Heart left ventricle (tissue), 16 donors: ENCODE measurements at regions of chr16 and their contacts with region 1.

Region 1: DNA sequence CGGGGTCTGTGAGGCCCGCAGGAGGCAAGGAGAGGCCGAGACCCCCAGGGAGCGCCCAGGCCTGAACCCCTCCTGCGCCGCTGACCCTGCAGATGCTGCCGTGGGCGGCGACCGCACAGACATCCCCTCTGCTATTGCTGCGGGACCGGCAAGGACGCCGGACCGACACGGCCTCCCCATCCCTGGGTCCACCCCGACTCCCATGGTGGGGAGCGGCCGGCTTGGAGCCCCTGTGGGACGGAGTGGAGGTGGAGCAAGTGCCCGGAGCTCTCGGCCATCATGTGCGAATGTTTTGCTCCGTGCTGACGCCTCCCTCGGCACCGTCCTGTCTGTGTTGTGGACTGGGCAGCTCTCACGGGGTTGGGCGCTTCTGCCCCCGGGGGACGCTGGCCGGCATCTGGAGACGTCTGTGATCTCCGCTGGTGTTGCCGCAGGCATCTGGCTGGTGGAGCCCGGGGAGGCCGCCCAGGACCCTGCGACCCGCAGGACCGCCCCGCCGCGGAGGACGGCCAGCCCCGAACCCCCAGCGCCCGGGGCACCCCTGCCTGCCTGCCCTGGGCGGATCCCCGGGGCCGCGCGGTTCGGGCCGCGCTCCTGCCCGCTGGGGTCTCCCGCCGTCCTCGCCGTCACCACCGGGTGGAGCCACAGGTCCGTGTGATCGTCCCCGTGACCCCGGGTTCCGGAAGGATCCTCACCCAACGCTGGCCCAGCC is 12.8 kb upstream of the GNG13 start:
- DNase-seq: peak in 2 of 5 donors; percentile 40 to 63
- ATAC-seq: peak in 3 of 4 donors; percentile 64 to 83 (median 67)
- H3K4me3 ChIP-seq: peak overlapping the region in 9 of 12 donors; percentile 13 to 41 (median 28)
- H3K27ac ChIP-seq: no peak overlapping the region
- H3K4me1 ChIP-seq: peaks cover 0 to 24% (median 4%) of the 10 kb centered on the region in 12 donors
- H3K27me3 ChIP-seq: peaks cover 10 to 73% (median 24%) of the 10 kb centered on the region in 9 donors
- CTCF ChIP-seq: peak; percentile 35 to 71 (median 62)
- POLR2A ChIP-seq: no peak

Region 2: GRCh38 chr16:1054660-1055556 is 241.5 kb after region 1 on chr16:
- intact Hi-C with region 1: loop called (anchors 1 to 5 kb)
- DNase-seq: peak in 4 of 5 donors; percentile 51 to 75 (median 56)
- ATAC-seq: peak; percentile 30 to 83 (median 72)
- H3K4me3 ChIP-seq: no peak overlapping the region
- H3K27ac ChIP-seq: no peak overlapping the region
- H3K4me1 ChIP-seq: peaks cover 0 to 6% (median 0%) of the 10 kb centered on the region in 12 donors
- H3K27me3 ChIP-seq: peaks cover 0 to 42% (median 7%) of the 10 kb centered on the region in 9 donors
- CTCF ChIP-seq: peak; percentile 65 to 86 (median 80)
- POLR2A ChIP-seq: no peak

Region 3: DNA sequence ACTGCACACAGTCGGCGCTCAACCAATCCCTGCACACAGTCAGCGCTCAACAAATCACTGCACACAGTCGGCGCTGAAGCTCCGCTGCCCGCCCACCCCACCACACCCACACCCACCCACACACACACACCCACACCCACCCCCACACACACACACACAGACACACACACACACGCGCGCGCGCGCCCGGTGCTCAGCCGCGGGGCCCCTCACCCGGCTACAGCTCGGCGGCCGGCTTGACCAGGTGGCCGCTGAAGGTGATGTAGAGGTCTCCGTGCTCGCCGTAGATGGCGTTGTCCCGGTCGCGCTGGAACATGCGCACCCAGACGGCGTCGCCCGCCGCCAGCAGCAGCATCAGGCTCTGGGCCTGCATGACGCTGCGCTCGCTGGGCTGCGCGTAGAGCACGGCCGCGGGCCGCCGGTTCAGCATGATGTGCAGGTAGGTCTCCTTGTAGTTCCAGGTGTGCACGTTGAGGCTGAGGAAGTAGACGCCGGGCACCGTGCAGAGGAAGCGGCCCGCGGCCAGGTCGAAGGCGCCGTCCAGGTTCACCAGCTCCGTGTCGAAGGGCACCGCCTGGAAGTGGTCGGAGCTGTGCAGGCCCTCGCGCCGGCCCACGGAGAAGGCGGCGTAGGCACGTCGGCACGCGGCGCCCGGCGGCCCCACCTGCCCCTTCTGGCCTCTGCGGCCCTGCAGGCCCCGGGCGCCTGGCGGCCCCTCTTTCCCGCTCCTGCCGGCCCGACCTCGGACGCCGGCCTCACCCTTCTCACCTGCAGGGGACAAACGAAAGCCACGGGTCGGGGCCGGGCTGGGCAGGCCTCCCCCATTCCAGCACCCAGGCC is 280.1 kb after region 1 on chr16:
- intact Hi-C with region 1: loop called in 2 of 10 experiments (anchors 5 to 10 kb)
- DNase-seq: no peak
- ATAC-seq: no peak
- H3K4me3 ChIP-seq: no peak overlapping the region
- H3K27ac ChIP-seq: no peak overlapping the region
- H3K4me1 ChIP-seq: peaks cover 0 to 60% (median 26%) of the 10 kb centered on the region in 12 donors
- H3K27me3 ChIP-seq: peaks cover 0 to 26% (median 3%) of the 10 kb centered on the region in 9 donors
- CTCF ChIP-seq: no peak
- POLR2A ChIP-seq: no peak

Region 4: DNA sequence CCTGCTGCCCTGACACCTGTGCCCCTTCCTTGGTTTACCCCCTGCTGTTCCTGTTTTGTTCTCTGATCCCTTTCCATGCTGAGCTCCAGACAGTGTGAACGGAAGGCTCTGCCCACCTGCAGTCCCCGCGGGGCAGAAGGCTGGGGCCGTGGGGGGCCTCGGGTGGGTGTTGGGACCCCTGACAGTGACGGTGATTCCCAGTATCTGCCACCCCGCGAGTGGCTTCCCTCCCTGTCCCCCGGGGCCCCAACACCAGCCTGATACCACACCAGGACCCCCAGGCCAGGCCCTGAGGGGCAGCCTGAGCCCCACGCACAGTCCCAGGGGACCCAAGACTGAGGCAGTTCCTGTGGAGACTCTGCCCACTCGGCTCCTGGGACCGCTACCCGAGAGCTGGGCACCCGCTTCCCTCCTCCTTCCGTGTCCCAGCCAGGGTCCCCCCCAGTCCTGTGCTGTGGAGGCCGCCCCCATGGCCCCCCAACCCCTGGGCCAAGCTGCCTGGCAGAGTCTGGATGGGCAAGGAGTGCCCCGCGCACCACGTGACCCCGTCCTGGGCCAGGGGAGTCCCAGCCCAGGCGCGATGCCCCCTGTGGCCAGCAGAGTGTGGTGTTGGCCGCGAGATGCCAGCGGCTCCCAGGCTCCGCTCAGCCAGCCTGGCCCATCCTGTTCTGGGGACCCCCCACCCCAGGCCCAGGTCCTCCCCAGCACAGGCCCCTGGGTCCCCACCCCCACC is 292.7 kb after region 1 on chr16:
- intact Hi-C with region 1: loop called in 2 of 10 experiments (anchors 1 to 2 kb)
- DNase-seq: peak; percentile 50 to 80 (median 67)
- ATAC-seq: peak; percentile 60 to 83 (median 75)
- H3K4me3 ChIP-seq: no peak overlapping the region
- H3K27ac ChIP-seq: no peak overlapping the region
- H3K4me1 ChIP-seq: peaks cover 0 to 8% (median 5%) of the 10 kb centered on the region in 12 donors
- H3K27me3 ChIP-seq: peaks cover 13 to 75% (median 30%) of the 10 kb centered on the region in 9 donors
- CTCF ChIP-seq: peak; percentile 49 to 88 (median 70)
- POLR2A ChIP-seq: no peak

Region 5: DNA sequence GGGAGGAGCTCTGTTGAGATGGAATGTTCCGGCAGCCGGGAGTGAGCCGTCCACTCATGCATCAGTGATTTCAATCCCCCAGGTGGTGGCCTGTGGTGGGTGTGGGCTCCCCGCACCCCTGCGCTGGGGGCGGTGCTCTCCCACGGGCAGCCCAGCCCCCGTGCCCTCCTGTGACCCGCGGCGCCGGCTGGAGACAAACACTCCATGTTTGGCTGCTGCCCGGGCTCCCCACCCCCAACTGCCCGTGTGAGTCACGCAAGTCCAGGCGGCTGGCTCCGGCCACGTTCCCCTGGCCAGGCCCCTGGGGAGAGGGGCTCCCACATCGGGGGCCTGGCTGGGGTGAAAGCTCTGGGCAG is 368.9 kb after region 1 on chr16:
- intact Hi-C with region 1: no loop called
- DNase-seq: peak; percentile 61 to 89 (median 76)
- ATAC-seq: peak; percentile 43 to 74 (median 70)
- H3K4me3 ChIP-seq: peak overlapping the region in 1 of 12 donors; percentile 1
- H3K27ac ChIP-seq: peak overlapping the region in 8 of 12 donors; percentile 22 to 90 (median 62)
- H3K4me1 ChIP-seq: peaks cover 0 to 29% (median 8%) of the 10 kb centered on the region in 12 donors
- H3K27me3 ChIP-seq: peaks cover 0 to 27% (median 0%) of the 10 kb centered on the region in 9 donors
- CTCF ChIP-seq: no peak
- POLR2A ChIP-seq: no peak

Region 6: DNA sequence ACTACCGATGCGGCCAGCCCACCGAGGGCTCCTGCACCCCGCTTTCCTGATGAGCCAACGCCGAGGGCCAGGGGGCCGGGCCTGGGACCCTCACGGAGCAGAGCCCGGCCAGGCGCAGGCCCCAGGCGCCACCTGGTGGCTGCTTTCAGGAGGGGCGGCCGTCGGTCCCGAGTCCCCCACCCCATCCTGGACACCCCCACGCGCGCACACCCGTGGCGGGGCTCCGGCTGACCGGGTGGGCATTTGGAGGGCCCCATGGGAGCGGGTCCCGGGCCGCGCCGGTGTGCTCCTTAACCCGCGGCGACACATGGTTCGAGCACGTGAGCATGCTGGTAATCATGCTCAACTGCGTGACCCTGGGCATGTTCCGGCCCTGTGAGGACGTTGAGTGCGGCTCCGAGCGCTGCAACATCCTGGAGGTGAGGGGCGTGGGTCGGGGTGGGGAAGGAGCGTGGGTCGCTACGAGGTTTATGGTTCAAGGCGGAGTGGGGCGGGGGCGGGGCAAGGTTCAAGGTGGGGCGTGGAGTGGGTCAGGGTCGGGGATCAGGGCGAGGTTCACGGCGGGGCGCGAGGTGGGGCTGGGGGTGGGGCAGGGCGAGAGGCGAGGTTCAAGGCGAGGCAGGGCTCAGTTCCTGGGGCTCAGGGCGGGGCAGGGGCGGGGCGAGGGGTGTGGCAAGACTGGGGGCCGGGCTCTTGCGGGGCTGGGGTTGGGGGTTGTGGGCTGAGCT is 381.5 kb after region 1 on chr16:
- intact Hi-C with region 1: loop called in 1 of 10 experiments (anchors 10 kb)
- DNase-seq: no peak
- ATAC-seq: peak in 3 of 4 donors; percentile 8 to 55 (median 20)
- H3K4me3 ChIP-seq: no peak overlapping the region
- H3K27ac ChIP-seq: peak overlapping the region in 1 of 12 donors; percentile 80
- H3K4me1 ChIP-seq: peaks cover 0 to 6% (median 0%) of the 10 kb centered on the region in 12 donors
- H3K27me3 ChIP-seq: peaks cover 0 to 9% (median 0%) of the 10 kb centered on the region in 9 donors
- CTCF ChIP-seq: peak; percentile 59 to 86 (median 72)
- POLR2A ChIP-seq: no peak